Activated CD4-positive, alpha-beta T cell treated with anti-CD3 and anti-CD28 coated beads, Interleukin-2, amount 10 ng/mL, durations not matched to agents 24 days and 14 days (primary cell): ENCODE measurements at regions of chr1 and their contacts with region 1.

Region 1: DNA sequence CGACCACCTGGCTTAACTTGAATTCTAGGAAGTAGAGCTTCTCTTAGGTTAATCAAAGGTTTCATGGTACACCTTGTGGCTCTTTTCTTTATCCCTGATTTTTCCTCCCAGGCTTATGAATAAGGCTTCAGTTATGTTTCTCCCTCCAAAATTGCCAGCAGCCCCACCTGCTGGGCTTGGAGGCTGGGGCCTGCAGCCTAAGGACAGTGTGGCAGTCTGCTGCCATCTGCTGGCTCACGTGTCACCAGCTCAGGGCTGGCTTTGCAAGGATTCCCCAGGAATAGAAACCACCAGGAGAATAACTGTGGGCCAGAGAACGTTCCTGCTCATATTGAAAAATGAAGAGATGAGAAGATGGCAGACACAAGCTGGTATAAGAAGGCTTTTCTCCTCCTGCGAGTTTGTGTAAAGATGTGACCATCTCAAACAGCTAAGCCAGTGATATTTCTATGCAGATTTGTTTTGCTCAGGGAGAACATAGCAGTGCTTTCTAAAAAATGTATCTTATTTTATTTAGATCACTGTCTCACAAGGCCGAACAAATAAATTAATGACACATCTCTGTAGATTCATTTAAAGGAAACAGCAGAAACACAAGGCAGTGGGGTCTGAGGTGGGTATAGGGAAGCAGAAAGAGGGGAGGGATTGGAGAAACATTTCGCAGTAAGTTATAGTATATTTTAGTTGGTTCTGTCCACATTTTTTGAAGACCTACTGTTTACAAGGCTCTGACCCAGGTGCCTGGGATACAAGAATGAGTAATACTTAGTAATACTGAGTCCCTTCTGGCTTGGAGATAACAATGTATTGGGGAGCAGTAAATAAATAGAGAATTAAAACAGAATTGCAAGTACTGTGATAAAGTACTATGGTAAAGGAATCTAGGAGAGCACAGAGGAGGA is 291.1 kb upstream of the SGIP1 start:
- DNase-seq: peak; percentile 93
- H3K4me3 Mint-ChIP-seq: no peak overlapping the region
- H3K27ac Mint-ChIP-seq: no peak overlapping the region
- H3K4me1 Mint-ChIP-seq: peaks cover 25% of the 10 kb centered on the region
- H3K27me3 Mint-ChIP-seq: peaks cover 6% of the 10 kb centered on the region

Region 2: DNA sequence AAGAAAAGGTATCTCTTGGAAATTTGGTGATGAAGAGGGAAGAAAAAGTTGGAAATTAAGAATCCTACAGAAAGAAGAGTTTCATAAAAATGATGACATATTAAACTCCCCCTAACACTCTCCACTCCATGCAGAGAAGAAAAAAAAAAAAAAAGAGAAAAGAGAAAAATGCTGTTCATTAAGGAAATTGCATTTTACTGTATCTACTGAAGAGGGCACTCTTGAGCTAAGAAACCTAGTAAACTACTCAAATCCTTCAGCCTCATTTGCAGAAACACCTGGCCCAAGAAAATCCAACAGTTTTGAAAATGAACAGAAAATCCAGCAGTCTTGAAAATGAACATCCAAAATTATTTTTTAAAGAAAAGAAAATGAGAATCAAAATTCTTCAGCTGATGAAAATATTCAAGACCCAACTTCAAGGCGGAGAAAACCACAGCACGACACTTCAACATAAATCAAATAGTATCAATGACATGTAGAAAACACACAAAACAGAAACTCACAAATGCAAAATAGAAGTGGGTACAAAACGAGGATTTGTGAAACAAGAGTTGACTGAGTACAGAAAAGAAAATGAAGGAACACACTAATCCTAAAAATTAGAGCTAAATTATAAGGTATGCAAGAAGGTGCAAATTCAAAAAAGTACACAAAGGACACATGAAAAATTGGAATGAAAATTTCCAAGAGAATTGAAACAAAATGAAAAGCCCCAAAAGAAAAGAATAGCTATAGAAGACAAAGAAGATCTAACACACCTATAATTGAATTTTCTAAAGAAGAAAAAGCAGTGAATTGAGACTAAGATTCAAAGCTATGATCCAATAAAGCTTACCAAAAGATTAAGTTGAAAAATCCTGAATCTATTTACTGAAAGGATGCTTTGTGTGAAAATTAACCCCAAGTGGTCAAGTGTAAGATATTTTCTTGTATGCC is 1006.8 kb before region 1 on chr1:
- intact Hi-C with region 1: loop called (anchors 10 kb)
- DNase-seq: no peak
- H3K4me3 Mint-ChIP-seq: no peak overlapping the region
- H3K27ac Mint-ChIP-seq: no peak overlapping the region
- H3K4me1 Mint-ChIP-seq: peaks cover 13% of the 10 kb centered on the region
- H3K27me3 Mint-ChIP-seq: peaks cover 17% of the 10 kb centered on the region

Region 3: GRCh38 chr1:65431111-65431705 is 811.7 kb before region 1 on chr1:
- intact Hi-C with region 1: loop called (anchors 2 kb)
- DNase-seq: peak; percentile 64
- H3K4me3 Mint-ChIP-seq: no peak overlapping the region
- H3K27ac Mint-ChIP-seq: no peak overlapping the region
- H3K4me1 Mint-ChIP-seq: peaks cover 14% of the 10 kb centered on the region
- H3K27me3 Mint-ChIP-seq: no peaks in the 10 kb centered on the region

Region 4: GRCh38 chr1:65958561-65959350 is 284.1 kb before region 1 on chr1:
- intact Hi-C with region 1: loop called (anchors 1 kb)
- DNase-seq: peak; percentile 82
- H3K4me3 Mint-ChIP-seq: no peak overlapping the region
- H3K27ac Mint-ChIP-seq: no peak overlapping the region
- H3K4me1 Mint-ChIP-seq: peaks cover 4% of the 10 kb centered on the region
- H3K27me3 Mint-ChIP-seq: peaks cover 3% of the 10 kb centered on the region

Region 5: DNA sequence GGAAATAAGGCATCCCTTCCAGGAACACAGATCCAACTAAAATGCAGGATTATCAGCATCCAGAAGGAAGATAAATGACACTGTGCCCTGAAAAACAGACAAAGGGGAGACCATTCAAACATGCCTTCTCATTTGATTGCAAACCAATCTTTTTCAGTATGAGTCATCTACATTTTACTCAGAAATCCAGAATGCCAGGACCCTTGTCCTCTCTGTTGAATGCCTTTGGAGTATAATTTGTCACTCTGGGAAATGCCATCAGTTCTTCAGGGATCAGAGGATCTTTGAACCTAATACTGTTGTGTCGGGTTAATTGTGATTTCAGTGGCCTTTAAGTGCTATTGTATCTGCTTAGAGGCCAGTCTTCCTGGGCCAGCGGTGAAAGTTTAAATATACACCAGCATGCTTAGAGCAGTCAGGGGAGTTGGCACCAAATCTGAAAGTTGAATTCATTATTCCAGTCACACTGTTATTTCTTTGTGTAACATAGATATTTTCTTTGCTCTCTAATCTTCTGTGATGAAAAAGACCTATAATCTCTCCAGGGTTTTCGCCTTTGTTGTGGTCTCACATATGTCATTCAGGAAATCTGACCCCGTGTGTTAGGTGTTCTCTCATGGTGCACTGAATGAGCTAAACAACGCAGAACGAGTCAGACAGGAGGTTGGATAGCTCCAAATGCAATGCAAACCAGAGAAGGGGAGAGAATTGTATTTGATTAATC is 73.8 kb before region 1 on chr1:
- intact Hi-C with region 1: loop called (anchors 5 kb)
- DNase-seq: peak; percentile 73
- H3K4me3 Mint-ChIP-seq: peak overlapping the region; percentile 20
- H3K27ac Mint-ChIP-seq: no peak overlapping the region
- H3K4me1 Mint-ChIP-seq: peaks cover 20% of the 10 kb centered on the region
- H3K27me3 Mint-ChIP-seq: peaks cover 25% of the 10 kb centered on the region

Region 6: GRCh38 chr1:66262211-66262963 is 19.5 kb after region 1 on chr1:
- intact Hi-C with region 1: no loop called
- DNase-seq: no peak
- H3K4me3 Mint-ChIP-seq: no peak overlapping the region
- H3K27ac Mint-ChIP-seq: no peak overlapping the region
- H3K4me1 Mint-ChIP-seq: peaks cover 54% of the 10 kb centered on the region
- H3K27me3 Mint-ChIP-seq: no peaks in the 10 kb centered on the region

Region 7: DNA sequence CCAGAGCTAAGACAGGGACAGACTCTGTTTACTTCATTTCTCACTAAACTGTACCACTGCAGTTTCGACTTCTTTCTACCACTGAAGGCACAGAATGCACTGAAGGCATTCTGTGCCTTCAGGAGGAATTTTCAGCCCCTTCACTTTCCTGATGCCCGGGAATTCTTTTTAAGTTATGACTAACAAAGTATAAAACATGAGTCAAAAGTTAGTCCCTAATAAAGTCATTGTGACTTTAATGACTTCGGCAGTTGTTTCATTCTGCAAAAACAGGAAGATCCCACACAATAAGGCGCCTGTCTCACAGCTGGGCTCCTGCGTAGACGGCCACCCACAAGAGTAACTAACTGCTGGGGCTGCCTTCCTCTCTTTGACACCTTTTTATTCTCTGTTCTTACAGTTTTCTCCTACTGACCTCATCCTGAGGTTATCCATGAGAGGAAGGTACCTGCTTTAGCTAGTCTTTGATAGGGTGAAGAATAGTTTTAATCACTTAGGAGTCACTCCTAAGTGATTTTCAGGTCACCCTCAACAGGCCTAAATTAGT is 107.2 kb after region 1 on chr1:
- intact Hi-C with region 1: loop called (anchors 1 kb)
- DNase-seq: peak; percentile 82
- H3K4me3 Mint-ChIP-seq: peak overlapping the region; percentile 80
- H3K27ac Mint-ChIP-seq: peak overlapping the region; percentile 90
- H3K4me1 Mint-ChIP-seq: peaks cover 72% of the 10 kb centered on the region
- H3K27me3 Mint-ChIP-seq: no peaks in the 10 kb centered on the region

Region 8: DNA sequence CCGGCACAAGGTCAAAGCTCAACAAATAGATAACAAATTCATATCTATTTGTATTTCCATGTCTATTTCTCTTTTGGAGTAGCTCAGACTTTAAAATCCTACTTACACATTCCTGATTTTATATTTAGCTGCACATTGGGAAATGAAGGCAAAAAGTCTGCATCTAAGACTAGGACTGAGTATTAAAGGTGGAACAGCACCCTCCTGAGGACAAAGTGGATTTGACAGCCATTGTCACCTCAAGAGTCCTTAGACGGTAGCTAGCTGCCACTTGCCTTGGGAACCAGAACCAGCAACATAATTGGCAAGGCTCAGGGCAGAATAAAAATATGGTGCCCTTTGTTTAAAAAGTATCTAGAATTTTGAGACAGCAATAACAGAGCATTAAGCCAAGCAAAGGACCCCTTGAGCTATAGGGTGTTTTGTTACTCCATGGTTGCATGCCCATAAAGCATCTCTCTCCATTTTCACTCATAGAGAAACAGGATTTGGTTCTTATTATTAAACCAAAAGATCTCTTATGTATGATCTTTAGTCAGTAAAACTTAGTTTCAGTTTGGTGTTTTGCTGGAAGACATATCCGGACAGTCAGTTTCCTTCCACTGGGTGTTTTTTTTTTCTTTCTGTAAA is 261.1 kb after region 1 on chr1:
- intact Hi-C with region 1: loop called (anchors 5 kb)
- DNase-seq: peak; percentile 76
- H3K4me3 Mint-ChIP-seq: no peak overlapping the region
- H3K27ac Mint-ChIP-seq: no peak overlapping the region
- H3K4me1 Mint-ChIP-seq: no peaks in the 10 kb centered on the region
- H3K27me3 Mint-ChIP-seq: peaks cover 37% of the 10 kb centered on the region